Right ventricle myocardium inferior (tissue), 1 donor: ENCODE measurements at regions of chrX and their contacts with region 1.

Region 1: GRCh38 chrX:14029425-14030173 is at the start of gene GEMIN8:
- DNase-seq: peak; percentile 91
- ATAC-seq: peak; percentile 99
- total RNA-seq, gene GEMIN8: 9.3 TPM

Region 2: GRCh38 chrX:13506574-13506973 is 523.0 kb before region 1 on chrX:
- intact Hi-C with region 1: loop called (anchors 1 kb)
- DNase-seq: no peak
- ATAC-seq: no peak

Region 3: GRCh38 chrX:13653022-13653693 is 376.4 kb before region 1 on chrX and contains the start of gene TCEANC:
- intact Hi-C with region 1: loop called (anchors 2 kb)
- DNase-seq: peak; percentile 97
- ATAC-seq: peak; percentile 100
- total RNA-seq, gene TCEANC: 6.4 TPM

Region 4: GRCh38 chrX:13658602-13659001 is 371.0 kb before region 1 on chrX:
- intact Hi-C with region 1: loop called (anchors 2 kb)
- DNase-seq: no peak
- ATAC-seq: peak; percentile 34

Region 5: DNA sequence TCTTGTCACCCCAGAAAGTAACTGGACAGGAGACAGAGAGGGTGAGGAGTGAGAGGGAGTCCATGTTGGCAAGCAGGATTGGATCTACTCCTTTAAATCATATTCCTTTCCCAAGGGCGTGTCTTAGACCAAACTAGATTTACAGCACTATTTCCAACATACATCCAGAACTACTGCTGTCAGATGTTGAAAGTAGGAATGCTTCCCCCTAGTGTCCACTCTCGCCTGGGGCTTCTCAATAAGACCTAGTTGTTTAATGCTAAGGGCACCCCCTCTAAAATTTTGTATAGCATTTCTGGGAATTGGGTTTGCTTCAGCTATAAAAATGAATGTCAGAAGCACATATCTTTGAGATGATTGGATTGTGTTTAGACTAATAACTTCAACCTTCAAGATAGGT is 281.8 kb before region 1 on chrX:
- intact Hi-C with region 1: loop called (anchors 2 kb)
- DNase-seq: no peak
- ATAC-seq: no peak